ENCODE measurements at regions of chr11 and their contacts with region 1.

Region 1: GRCh38 chr11:126440792-126441514 is 85.5 kb downstream of the ST3GAL4 start:
- DNase-seq: peak; percentile 79 to 85 (median 83)
- ATAC-seq: peak; percentile 90
- H3K4me3 ChIP-seq: no peak overlapping the region
- H3K4me1 ChIP-seq: peaks cover 11% of the 10 kb centered on the region
- CTCF ChIP-seq: peak; percentile 86

Region 2: GRCh38 chr11:126480410-126481302 is 39.7 kb after region 1 on chr11:
- intact Hi-C with region 1: loop called in 1 of 2 experiments (anchors 2 kb)
- DNase-seq: peak; percentile 73 to 87 (median 76)
- ATAC-seq: peak; percentile 93
- H3K4me3 ChIP-seq: no peak overlapping the region
- H3K4me1 ChIP-seq: peaks cover 18% of the 10 kb centered on the region
- CTCF ChIP-seq: peak; percentile 90

Region 3: DNA sequence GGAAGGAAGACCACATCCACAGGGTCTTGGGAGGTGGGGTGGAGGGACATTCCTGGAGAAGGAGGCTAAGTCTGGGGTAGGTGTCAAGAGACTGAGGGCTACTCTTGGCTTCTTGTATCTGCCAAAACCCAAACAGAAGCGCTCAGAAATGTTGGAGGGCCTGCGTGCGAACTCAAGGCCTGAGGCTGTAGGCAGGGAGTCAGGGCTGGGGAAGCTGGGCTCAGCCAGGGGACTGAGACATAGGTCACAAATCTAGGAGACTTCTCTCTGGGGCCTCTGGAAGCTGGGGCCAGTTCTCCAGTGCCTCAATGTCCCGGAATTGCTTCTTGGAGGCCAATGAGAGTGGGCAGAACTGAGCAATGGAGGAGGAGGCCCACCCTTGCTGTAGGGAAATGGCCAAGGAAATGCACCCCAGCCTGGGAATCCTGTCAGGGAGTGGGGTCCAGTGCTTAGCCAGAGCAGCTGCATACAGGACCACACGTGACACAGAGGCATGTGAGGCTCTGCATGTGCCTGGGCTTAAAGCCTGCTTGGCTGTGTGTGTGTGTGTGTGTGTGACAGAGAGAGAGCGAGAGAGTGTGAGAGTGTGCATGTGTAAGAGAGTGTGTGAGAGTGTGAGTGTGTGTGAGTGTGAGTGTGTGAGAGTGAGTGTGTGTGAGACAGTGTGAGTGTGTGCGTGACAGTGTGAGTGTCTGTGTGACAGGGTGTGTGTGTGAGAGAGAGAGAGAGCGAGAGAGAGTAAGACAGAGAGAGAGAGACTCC is 55.8 kb after region 1 on chr11:
- intact Hi-C with region 1: no loop called
- DNase-seq: no peak
- ATAC-seq: peak; percentile 16
- H3K4me3 ChIP-seq: no peak overlapping the region
- H3K4me1 ChIP-seq: no peaks in the 10 kb centered on the region
- CTCF ChIP-seq: no peak

Region 4: GRCh38 chr11:126711977-126712625 is 271.1 kb after region 1 on chr11:
- intact Hi-C with region 1: no loop called
- DNase-seq: no peak
- ATAC-seq: no peak
- H3K4me3 ChIP-seq: no peak overlapping the region
- H3K4me1 ChIP-seq: no peaks in the 10 kb centered on the region
- CTCF ChIP-seq: no peak

Region 5: GRCh38 chr11:126989942-126990715 is 549.2 kb after region 1 on chr11:
- intact Hi-C with region 1: loop called in 1 of 2 experiments (anchors 10 kb)
- DNase-seq: peak; percentile 62 to 80 (median 78)
- ATAC-seq: peak; percentile 86
- H3K4me3 ChIP-seq: no peak overlapping the region
- H3K4me1 ChIP-seq: no peaks in the 10 kb centered on the region
- CTCF ChIP-seq: peak; percentile 91

Region 6: GRCh38 chr11:127345819-127346459 is 905.0 kb after region 1 on chr11:
- intact Hi-C with region 1: loop called in 1 of 2 experiments (anchors 10 kb)
- DNase-seq: peak in 2 of 3 donors; percentile 22 to 30
- ATAC-seq: no peak
- H3K4me3 ChIP-seq: no peak overlapping the region
- H3K4me1 ChIP-seq: no peaks in the 10 kb centered on the region
- CTCF ChIP-seq: peak; percentile 54